H1 (cell line): ENCODE measurements at regions of chr7 and their contacts with region 1.

Region 1: DNA sequence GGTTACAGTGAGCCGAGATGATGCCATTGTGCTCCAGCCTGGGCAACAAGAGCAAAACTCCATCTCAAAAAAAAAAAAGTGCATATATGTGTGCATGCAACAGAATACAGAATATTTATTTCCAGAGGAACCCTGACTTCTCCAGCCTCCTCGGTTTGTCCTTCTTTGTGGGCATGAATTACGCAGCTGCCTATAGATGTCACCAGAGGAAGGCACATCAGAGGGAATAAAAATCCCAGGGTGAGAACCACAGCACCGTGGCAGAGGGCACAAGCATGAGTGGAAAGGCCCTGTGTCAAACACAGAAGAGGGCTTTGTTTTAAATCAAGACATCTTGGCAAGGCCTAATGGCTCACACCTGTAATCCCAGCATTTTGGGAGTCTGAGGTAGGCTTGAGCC is 24.4 kb upstream of the OCM2 start:
- DNase-seq: no peak
- H3K4me3 ChIP-seq: no peak overlapping the region
- H3K27ac ChIP-seq: no peak overlapping the region
- H3K4me1 ChIP-seq: no peaks in the 10 kb centered on the region
- H3K27me3 ChIP-seq: no peaks in the 10 kb centered on the region
- CTCF ChIP-seq: no peak
- EP300 ChIP-seq: no peak
- POLR2A ChIP-seq: no peak
- RAD21 ChIP-seq: peak; percentile 7 to 29; a peak in 3 of 4 replicates

Region 2: DNA sequence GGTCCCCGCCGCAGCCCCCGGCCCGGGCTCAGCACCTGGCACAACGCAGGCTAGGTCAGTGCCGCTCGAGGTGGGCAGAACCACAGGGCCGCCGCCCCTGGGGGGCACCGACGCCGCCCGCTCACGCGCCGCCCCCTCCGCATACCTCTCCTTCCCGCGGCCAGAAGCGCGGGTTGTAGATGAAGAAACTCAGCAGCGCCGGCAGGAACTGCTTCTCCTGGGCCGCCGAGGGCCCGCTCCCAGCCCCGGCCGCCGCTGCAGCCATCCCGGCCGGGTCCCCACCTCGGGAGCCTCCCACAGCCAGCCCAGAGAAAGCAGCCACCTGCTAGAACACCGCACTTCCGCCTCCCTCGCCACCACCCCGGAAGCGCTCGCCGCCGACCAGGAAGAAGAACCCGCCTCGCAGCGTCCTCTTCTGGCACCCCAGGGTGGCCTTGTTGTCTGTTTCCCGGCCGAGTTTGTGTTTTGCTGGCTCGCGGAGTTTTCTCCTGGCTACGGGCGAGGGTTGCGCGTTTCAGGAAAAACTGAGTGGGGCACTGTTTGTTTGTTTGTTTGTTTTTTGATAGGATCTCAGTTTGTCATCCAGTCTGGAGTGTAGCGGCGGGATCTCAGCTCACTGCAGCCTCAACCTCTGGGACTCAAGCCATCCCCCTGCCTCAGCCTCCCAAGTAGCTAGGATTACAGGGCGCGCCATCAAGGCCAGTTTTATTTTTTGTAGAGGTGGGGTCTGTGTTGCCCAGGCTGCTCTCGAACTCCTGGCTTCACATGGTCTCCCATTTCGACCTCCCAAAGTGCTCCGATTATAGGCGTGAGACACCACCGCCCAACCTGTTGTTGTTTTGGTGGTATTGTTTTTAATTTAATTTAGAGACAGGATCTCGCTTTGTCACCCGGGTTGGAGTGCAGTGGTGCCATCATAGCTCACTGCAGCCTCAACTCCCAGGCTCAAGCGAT is 42.1 kb before region 1 on chr7:
- CTCF ChIA-PET with region 1: interaction called, 11 read pairs
- POLR2A ChIA-PET with region 1: interaction called, 3 read pairs
- DNase-seq: peak in 1 of 2 experiments; percentile 69
- H3K4me3 ChIP-seq: peak overlapping the region; percentile 61 to 90 (median 78)
- H3K27ac ChIP-seq: peak overlapping the region; percentile 17; the same call in 1 of the 2 replicates
- H3K4me1 ChIP-seq: no peaks in the 10 kb centered on the region
- H3K27me3 ChIP-seq: no peaks in the 10 kb centered on the region
- CTCF ChIP-seq: no peak
- EP300 ChIP-seq: peak in 1 of 2 experiments; percentile 6; a peak in 1 of 3 replicates
- POLR2A ChIP-seq: 0 out of 3 replicates have a peak, but pooled peaks of 1 of the 2 experiments have one; percentile 23
- RAD21 ChIP-seq: no peak

Region 3: GRCh38 chr7:98000356-98000755 is 14.0 kb before region 1 on chr7:
- CTCF ChIA-PET with region 1: interaction called, 11 read pairs
- POLR2A ChIA-PET with region 1: no interaction called
- DNase-seq: no peak
- H3K4me3 ChIP-seq: no peak overlapping the region
- H3K27ac ChIP-seq: no peak overlapping the region
- H3K4me1 ChIP-seq: no peaks in the 10 kb centered on the region
- H3K27me3 ChIP-seq: no peaks in the 10 kb centered on the region
- CTCF ChIP-seq: no peak
- EP300 ChIP-seq: no peak
- POLR2A ChIP-seq: no peak
- RAD21 ChIP-seq: no peak